ENCODE measurements at regions of chr14 and their contacts with region 1.

Region 1: GRCh38 chr14:76514613-76515012 is 138.7 kb downstream of the ESRRB start:
- DNase-seq: peak; percentile 89
- H3K4me3 ChIP-seq: no peak overlapping the region
- H3K27ac ChIP-seq: peak overlapping the region; percentile 64
- H3K4me1 ChIP-seq: peaks cover 52% of the 10 kb centered on the region
- H3K27me3 ChIP-seq: no peaks in the 10 kb centered on the region
- CTCF ChIP-seq: peak; percentile 75

Region 2: DNA sequence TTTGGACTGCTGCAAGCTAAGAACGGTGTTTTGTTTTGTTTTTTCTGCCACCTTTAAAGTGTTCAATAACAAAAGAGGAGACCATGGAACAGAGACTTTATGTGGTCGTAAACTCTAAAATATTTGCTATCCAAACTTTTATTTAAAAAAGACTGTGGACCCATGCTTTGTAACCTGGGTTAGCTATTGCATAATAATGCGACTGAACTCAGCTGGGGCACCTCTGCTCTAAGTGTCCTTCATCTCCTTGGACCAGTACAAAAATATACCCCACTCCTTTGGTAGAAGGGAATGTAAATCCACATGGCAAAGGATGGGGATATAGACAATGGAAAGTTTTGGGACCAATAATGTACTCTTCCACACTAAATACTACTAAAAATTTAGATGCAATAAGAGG is 297.4 kb before region 1 on chr14:
- CTCF ChIA-PET with region 1: no interaction called
- POLR2A ChIA-PET with region 1: interaction called, 11 read pairs
- intact Hi-C with region 1: no loop called
- DNase-seq: no peak
- H3K4me3 ChIP-seq: no peak overlapping the region
- H3K27ac ChIP-seq: no peak overlapping the region
- H3K4me1 ChIP-seq: no peaks in the 10 kb centered on the region
- H3K27me3 ChIP-seq: no peaks in the 10 kb centered on the region
- CTCF ChIP-seq: no peak

Measured in A673 (cell line).